ENCODE measurements at regions of chr1 and their contacts with region 1.

Region 1: DNA sequence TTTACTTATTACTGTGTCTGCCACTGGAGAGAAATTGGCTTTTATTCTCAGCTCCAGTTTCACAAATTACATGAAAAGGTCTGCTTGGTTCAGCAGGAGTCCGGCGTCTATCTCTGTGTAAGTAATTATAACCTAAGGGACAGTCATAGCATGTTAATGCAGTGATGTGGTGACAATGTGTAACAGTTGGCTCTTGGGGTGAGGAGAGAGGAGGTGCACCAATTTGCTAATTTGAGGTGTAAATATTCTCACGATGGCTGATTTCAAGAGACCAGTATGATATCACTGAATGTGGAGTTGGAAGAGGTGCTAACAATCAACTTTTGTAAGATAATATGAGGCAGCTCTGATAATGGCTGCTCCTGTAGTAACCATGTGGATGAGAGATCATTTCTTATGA is 86.1 kb downstream of the CTH start:
- DNase-seq: no peak
- H3K27ac ChIP-seq: no peak overlapping the region
- CTCF ChIP-seq: no peak

Region 2: DNA sequence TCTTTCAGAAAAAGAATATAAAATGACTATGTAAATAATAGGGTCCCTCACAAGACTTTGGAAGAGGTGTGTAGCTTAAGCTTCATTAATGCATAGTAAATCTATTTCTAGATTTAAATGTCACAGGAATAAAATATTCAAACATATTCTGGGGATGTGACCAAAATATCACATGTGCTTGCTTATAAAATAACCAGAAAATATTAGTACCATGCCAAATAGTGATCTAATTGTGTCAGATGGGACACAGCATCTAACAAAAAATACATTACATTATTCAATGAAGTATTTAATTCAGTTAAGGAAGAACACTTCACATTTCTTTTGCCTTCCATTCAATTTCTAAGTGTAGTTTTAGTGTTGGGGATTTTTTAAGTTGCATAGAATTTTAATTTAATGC is 471.3 kb before region 1 on chr1:
- CTCF ChIA-PET with region 1: interaction called, 10 read pairs
- POLR2A ChIA-PET with region 1: no interaction called
- DNase-seq: no peak
- H3K27ac ChIP-seq: no peak overlapping the region
- CTCF ChIP-seq: no peak